ENCODE measurements at regions of chr12 and their contacts with region 1.

Region 1: GRCh38 chr12:108457006-108457733 is 57.9 kb upstream of the FICD start:
- DNase-seq: peak; percentile 89
- H3K4me3 ChIP-seq: no peak overlapping the region
- H3K27ac ChIP-seq: no peak overlapping the region
- H3K4me1 ChIP-seq: no peaks in the 10 kb centered on the region
- H3K27me3 ChIP-seq: peaks cover 34% of the 10 kb centered on the region
- CTCF ChIP-seq: peak; percentile 81

Region 2: GRCh38 chr12:108063192-108063591 is 394.0 kb before region 1 on chr12:
- CTCF ChIA-PET with region 1: interaction called, 3 read pairs
- POLR2A ChIA-PET with region 1: no interaction called
- intact Hi-C with region 1: loop called (anchors 5 kb)
- DNase-seq: peak; percentile 57
- H3K4me3 ChIP-seq: no peak overlapping the region
- H3K27ac ChIP-seq: no peak overlapping the region
- H3K4me1 ChIP-seq: no peaks in the 10 kb centered on the region
- H3K27me3 ChIP-seq: peaks cover 5% of the 10 kb centered on the region
- CTCF ChIP-seq: peak; percentile 72

Region 3: GRCh38 chr12:108129017-108129812 is 328.0 kb before region 1 on chr12 and contains the start of gene WSCD2:
- CTCF ChIA-PET with region 1: no interaction called
- POLR2A ChIA-PET with region 1: no interaction called
- intact Hi-C with region 1: loop called (anchors 10 kb)
- DNase-seq: peak; percentile 69
- H3K4me3 ChIP-seq: peak within 1 kb of the TSS; percentile 36
- H3K27ac ChIP-seq: no peak within 1 kb of the TSS
- H3K4me1 ChIP-seq: no peaks in the 10 kb centered on the region
- H3K27me3 ChIP-seq: peaks cover 94% of the 10 kb centered on the region
- CTCF ChIP-seq: peak; percentile 23; the same call in 1 of the 2 replicates
- total RNA-seq, gene WSCD2: not detected in 2 replicates

Region 4: GRCh38 chr12:108193917-108194316 is 263.3 kb before region 1 on chr12:
- CTCF ChIA-PET with region 1: no interaction called
- POLR2A ChIA-PET with region 1: no interaction called
- intact Hi-C with region 1: loop called (anchors 10 kb)
- DNase-seq: peak; percentile 44
- H3K4me3 ChIP-seq: no peak overlapping the region
- H3K27ac ChIP-seq: no peak overlapping the region
- H3K4me1 ChIP-seq: no peaks in the 10 kb centered on the region
- H3K27me3 ChIP-seq: peaks cover 3% of the 10 kb centered on the region
- CTCF ChIP-seq: peak; percentile 85

Region 5: DNA sequence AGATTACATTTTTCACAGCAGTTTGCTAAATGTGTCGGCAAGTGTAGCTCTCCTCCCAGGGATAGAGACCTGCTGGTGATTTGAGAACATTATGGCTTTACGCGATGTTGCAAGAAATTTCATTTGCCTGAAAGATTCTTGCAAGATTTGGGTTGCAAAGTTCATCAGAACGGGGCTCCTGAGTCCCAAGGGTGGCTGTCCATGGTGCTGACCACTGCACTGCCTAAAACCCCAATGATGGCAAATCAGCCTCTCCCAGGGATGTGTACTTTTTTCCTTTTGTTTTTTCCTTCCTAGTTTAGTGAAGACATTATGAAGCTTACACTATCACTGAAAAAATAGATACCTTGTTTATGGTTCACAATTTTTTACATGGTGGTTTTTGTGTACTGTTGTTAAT is 242.7 kb before region 1 on chr12:
- CTCF ChIA-PET with region 1: no interaction called
- POLR2A ChIA-PET with region 1: no interaction called
- intact Hi-C with region 1: no loop called
- DNase-seq: peak; percentile 40
- H3K4me3 ChIP-seq: no peak overlapping the region
- H3K27ac ChIP-seq: no peak overlapping the region
- H3K4me1 ChIP-seq: no peaks in the 10 kb centered on the region
- H3K27me3 ChIP-seq: peaks cover 13% of the 10 kb centered on the region
- CTCF ChIP-seq: no peak

Region 6: DNA sequence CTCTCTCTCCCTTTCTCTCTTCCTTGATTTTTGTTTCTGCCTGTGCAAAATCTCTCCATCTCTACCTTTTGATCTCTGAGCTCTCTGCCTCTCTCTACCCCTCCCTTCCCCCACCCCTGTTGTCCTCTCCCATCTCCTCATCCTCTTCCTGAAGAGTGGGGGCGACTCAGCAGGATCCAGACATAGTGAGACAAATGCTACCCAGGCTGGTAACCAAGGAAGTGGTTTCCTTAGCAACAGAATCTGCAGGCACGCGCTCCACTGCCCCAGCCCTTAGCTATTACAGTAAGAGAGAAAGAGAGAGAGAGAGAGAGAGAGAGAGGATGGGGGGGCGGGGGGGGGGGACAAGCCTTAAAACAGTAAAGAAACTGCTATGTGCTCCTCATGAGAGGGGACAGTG is 203.6 kb before region 1 on chr12:
- CTCF ChIA-PET with region 1: no interaction called
- POLR2A ChIA-PET with region 1: no interaction called
- intact Hi-C with region 1: loop called (anchors 10 kb)
- DNase-seq: peak; percentile 13
- H3K4me3 ChIP-seq: no peak overlapping the region
- H3K27ac ChIP-seq: no peak overlapping the region
- H3K4me1 ChIP-seq: no peaks in the 10 kb centered on the region
- H3K27me3 ChIP-seq: peaks cover 69% of the 10 kb centered on the region
- CTCF ChIP-seq: no peak

Region 7: GRCh38 chr12:108337235-108338223 is 119.6 kb before region 1 on chr12:
- CTCF ChIA-PET with region 1: no interaction called
- POLR2A ChIA-PET with region 1: no interaction called
- intact Hi-C with region 1: loop called (anchors 10 kb)
- DNase-seq: peak; percentile 61
- H3K4me3 ChIP-seq: no peak overlapping the region
- H3K27ac ChIP-seq: no peak overlapping the region
- H3K4me1 ChIP-seq: peaks cover 31% of the 10 kb centered on the region
- H3K27me3 ChIP-seq: no peaks in the 10 kb centered on the region
- CTCF ChIP-seq: peak; percentile 66

Measured in A673 (cell line).